ENCODE measurements at regions of chr5 and their contacts with region 1.

Region 1: DNA sequence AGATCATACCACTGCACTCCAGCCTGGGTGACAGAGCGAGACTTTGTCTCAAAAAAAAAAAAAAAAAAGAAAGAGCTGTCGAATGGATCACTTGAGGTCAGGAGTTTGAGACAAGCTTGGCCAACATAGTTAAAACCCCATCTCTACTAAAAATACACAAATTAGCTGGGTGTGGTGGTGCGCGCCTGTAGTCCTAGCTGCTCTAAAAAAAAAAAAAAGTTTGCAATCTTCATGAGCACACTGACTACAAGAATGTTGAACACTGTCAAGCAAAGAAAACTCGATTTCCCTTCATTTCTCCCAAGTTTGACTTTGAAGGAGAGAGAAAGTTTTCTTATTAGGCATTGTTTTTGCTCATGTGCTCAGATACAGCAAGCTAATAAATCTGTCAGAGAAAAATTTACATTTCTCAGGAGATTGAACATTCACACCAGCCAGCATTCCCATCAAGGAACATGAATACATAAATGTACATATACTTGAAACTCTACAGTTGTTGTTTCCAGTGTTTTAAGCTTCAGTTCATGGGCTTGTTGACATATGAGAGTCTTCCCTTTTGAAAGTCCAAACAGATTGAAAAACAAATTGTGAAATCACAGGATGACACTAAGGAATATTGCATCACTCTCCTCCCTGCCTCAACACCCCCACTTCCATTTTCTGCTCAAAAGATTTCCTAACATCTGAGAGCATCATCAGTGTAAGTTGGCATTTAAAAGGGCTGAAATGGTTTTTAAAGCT is 81.8 kb downstream of the ARRDC3 start:
- DNase-seq: no peak
- CTCF ChIP-seq: no peak

Region 2: DNA sequence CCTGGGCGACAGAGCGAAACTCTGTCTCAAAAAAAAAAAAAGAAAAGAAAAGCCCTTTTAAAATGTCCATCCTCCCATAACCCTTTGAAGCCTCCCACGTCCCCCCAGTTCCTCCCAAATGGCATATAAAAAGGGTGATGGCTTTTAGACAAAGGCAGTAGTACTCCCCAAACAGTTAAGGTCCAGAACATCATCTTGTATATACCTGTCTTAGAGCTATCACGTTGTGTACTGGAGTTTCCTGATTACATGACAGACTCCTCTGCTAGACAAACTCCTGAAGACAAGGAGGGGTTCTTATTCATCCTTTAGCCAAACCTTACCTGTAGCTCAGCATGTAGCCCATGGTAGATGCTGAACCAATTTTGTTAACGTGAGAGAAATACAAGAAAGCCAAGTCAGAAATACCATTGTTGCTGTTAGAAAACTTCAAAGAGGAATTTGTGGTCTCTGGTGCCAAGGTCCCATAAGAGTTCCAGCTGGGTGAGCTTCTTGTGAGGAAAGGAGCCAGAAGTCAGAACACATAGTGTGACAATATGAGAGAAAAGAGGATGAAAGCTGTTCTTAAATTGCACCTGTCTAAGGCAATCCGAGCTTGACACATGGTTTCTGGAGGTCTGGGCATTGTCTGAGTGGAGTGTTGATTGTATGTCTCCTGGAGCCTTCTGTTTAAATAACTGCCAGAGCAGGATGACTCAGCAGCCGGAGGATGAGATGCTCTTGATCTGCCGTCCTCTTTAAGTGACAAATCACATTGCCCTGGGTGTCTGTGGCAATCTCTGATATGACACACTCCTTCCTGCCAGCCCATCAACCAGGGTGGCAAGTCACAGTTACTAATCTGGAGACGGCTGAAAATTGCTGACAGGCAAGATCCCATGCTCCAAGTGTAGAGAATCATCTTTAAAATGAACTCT is 12.7 kb after region 1 on chr5:
- CTCF ChIA-PET with region 1: interaction called, 12 read pairs
- POLR2A ChIA-PET with region 1: no interaction called
- DNase-seq: peak; percentile 32
- CTCF ChIP-seq: no peak

Region 3: GRCh38 chr5:91373016-91373415 is 71.7 kb after region 1 on chr5:
- CTCF ChIA-PET with region 1: no interaction called
- POLR2A ChIA-PET with region 1: no interaction called
- DNase-seq: no peak
- CTCF ChIP-seq: no peak